Right ventricle myocardium inferior (tissue), 1 donor: ENCODE measurements at regions of chr4 and their contacts with region 1.

Region 1: DNA sequence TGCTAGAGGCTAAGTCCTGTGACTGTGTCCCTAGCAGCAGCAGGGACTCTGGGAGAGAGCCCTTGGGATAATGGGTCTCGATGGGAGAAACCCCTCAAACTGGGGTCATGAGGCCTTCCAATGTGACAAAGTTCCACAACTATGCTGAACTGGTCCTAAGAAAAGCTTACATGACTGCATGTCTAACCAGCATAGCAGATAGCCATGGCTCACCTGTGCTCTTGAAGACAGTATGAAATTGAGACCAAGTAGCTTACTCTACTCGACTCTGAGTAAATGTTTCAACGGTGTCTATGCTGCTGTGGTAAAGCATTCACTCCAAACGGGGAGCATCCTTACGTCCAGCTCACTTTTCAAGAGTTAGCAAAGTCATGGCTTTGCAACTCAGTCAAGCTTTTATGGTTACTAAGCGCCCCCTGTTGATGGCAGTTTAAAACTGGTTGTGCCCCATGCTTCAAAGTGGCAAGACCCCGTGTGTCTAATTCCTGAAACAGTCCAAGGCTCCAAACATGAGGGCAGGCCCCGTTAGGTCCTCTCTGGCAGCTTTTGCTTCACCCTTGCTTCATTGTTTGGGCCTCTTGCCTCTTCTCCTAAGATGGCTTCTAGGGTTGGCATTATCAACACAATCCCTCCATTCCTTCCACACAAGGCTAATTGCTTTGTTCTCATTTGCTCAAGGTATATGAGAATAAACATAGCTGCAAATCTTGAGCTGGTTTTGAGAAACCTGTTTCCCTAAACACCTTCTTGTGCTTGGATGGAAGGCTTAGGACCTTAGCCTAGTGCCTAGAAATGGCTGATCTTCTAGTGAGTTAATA is 46.6 kb downstream of the CCNG2 start:
- DNase-seq: peak; percentile 68
- ATAC-seq: peak; percentile 62

Region 2: GRCh38 chr4:77052352-77052751 is 151.2 kb before region 1 on chr4:
- intact Hi-C with region 1: loop called (anchors 5 kb)
- DNase-seq: no peak
- ATAC-seq: peak; percentile 37